ENCODE measurements at regions of chr2 and their contacts with region 1.

Region 1: GRCh38 chr2:218360447-218360846 is 3.8 kb downstream of the CATIP start:
- DNase-seq: no peak
- CTCF ChIP-seq: no peak

Region 2: GRCh38 chr2:218269899-218270720 is 90.3 kb before region 1 on chr2 and contains the starts of genes AAMP and PNKD:
- CTCF ChIA-PET with region 1: interaction called, 64 read pairs
- POLR2A ChIA-PET with region 1: no interaction called
- DNase-seq: peak; percentile 99
- CTCF ChIP-seq: no peak

Region 3: GRCh38 chr2:218301176-218301819 is 59.1 kb before region 1 on chr2:
- CTCF ChIA-PET with region 1: interaction called, 76 read pairs
- POLR2A ChIA-PET with region 1: interaction called, 3 read pairs
- DNase-seq: peak; percentile 76
- CTCF ChIP-seq: peak; percentile 91

Region 4: DNA sequence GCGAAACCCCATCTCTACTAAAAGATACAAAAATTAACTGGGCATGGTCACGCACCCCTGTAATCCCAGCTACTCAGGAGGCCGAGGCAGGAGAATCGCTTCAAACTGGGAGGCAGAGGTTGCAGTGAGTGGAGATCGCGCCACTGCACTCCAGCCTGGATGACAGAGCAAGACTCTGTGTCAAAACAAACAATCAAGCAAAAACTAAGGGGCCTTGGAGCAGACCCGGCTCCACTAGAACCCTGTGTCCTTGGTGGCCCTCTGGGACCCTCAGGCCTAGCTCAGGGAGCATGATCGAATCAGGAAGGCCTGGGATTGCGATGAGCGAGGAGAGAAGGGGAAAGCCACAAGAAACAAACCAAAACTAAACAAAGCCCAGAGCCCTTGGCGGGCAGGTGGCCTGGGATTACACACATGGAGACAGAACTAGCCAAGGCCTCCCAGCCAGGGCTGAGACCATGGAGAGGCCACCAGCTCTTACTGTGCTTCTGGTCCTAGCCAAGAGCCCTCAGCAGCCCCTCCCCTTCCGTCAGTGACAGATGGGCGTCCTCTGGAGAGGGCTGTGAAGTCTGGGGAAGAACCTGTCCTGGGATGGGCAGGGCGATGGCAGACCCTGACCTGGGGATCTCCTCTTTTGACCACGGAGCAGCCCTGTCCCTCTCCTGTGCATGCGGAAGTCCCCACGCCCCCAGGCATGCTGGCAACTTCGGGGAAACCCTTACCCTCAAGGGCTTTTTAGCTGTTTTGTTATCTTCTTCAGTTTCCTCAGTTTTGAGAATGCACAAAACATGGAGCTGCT is 31.2 kb before region 1 on chr2:
- CTCF ChIA-PET with region 1: interaction called, 16 read pairs
- POLR2A ChIA-PET with region 1: no interaction called
- DNase-seq: peak; percentile 75
- CTCF ChIP-seq: no peak

Region 5: GRCh38 chr2:218378053-218378452 is 17.6 kb after region 1 on chr2:
- CTCF ChIA-PET with region 1: interaction called, 12 read pairs
- POLR2A ChIA-PET with region 1: no interaction called
- DNase-seq: no peak
- CTCF ChIP-seq: no peak

Region 6: DNA sequence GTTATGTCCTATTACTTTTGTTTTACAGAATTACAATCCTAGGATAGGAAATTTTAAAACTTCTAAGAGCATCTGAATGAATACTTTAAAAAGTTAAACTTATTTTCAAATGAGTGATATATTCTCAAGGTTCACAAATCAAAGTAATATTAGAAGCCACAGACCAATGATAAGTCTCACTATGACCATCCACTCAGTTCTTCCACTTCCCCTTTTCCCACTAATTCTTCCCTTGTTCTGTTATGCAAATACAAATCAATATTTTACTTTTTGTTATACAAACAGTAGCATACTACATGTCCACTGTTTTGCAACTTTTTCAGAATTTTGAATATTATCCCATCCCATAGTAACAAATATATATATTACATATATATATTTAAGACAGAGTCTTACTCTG is 187.5 kb after region 1 on chr2:
- CTCF ChIA-PET with region 1: no interaction called
- POLR2A ChIA-PET with region 1: no interaction called
- DNase-seq: no peak
- CTCF ChIP-seq: no peak